ENCODE measurements at regions of chr6 and their contacts with region 1.

Region 1: DNA sequence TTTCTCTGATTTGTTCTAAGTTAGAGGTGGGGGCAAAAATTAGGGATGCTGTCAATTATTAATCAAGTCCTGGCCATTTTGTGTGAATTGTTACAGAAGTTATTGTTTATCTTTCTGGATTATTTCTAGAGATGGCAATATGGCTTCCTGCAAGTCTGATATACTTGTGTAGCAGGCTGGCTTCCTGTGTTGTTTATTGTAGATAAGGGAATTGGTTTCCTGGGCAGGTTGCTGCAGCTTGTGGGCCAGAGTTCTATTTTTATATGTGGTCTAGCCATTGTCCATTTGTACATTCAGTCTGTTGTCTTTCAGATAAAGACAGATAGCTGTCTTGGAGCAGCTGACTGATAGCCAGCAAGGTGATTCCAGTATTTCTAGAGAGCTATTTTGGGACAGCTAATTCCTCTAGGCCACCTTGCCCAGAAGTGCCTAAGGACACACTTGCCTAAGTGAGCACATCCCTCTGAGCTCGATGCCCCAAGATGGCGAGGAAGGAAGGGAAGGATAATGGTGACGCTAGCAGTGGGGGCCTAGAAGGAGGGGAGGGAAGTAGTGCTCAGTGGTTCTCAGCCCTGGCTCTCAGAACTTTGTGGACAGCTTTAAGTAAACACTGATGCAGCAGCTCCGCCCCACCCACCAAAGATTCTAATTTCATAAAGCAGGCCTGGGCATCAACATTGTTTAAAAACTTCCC is 25.5 kb downstream of the DDO start:
- DNase-seq: no peak
- ATAC-seq: no peak
- H3K4me3 ChIP-seq: no peak overlapping the region
- H3K27ac ChIP-seq: no peak overlapping the region
- H3K4me1 ChIP-seq: no peaks in the 10 kb centered on the region
- H3K27me3 ChIP-seq: no peaks in the 10 kb centered on the region
- CTCF ChIP-seq: no peak
- POLR2A ChIP-seq: no peak
- RAD21 ChIP-seq: no peak

Region 2: GRCh38 chr6:109526905-109527628 is 862.8 kb before region 1 on chr6:
- CTCF ChIA-PET with region 1: interaction called, 5 read pairs
- POLR2A ChIA-PET with region 1: no interaction called
- RAD21 ChIA-PET with region 1: no interaction called
- intact Hi-C with region 1: loop called (anchors 2 kb)
- DNase-seq: peak; percentile 69
- ATAC-seq: peak; percentile 96
- H3K4me3 ChIP-seq: no peak overlapping the region
- H3K27ac ChIP-seq: no peak overlapping the region
- H3K4me1 ChIP-seq: no peaks in the 10 kb centered on the region
- H3K27me3 ChIP-seq: no peaks in the 10 kb centered on the region
- CTCF ChIP-seq: peak; percentile 58 to 80 (median 78)
- POLR2A ChIP-seq: no peak
- RAD21 ChIP-seq: peak; percentile 86

Region 3: GRCh38 chr6:109705258-109705657 is 684.6 kb before region 1 on chr6:
- CTCF ChIA-PET with region 1: interaction called, 10 read pairs
- POLR2A ChIA-PET with region 1: no interaction called
- RAD21 ChIA-PET with region 1: no interaction called
- intact Hi-C with region 1: loop called (anchors 1 kb)
- DNase-seq: peak; percentile 78
- ATAC-seq: peak; percentile 99
- H3K4me3 ChIP-seq: no peak overlapping the region
- H3K27ac ChIP-seq: no peak overlapping the region
- H3K4me1 ChIP-seq: peaks cover 0 to 3% of the 10 kb centered on the region in 2 experiments; a peak in 1 of 4 replicates
- H3K27me3 ChIP-seq: no peaks in the 10 kb centered on the region
- CTCF ChIP-seq: peak; percentile 92 to 100 (median 100)
- POLR2A ChIP-seq: no peak
- RAD21 ChIP-seq: peak; percentile 100

Region 4: GRCh38 chr6:110039364-110039980 is 350.4 kb before region 1 on chr6:
- CTCF ChIA-PET with region 1: interaction called, 30 read pairs
- POLR2A ChIA-PET with region 1: no interaction called
- RAD21 ChIA-PET with region 1: interaction called, 5 to 7 read pairs
- intact Hi-C with region 1: loop called (anchors 1 kb)
- DNase-seq: peak; percentile 80
- ATAC-seq: peak; percentile 91
- H3K4me3 ChIP-seq: peak overlapping the region in 1 of 2 experiments; percentile 29; a peak in 1 of 4 replicates
- H3K27ac ChIP-seq: no peak overlapping the region
- H3K4me1 ChIP-seq: peaks cover 2 to 19% of the 10 kb centered on the region in 2 experiments; a peak in 3 of 4 replicates
- H3K27me3 ChIP-seq: no peaks in the 10 kb centered on the region
- CTCF ChIP-seq: peak; percentile 89 to 98 (median 98)
- POLR2A ChIP-seq: no peak
- RAD21 ChIP-seq: peak; percentile 99

Region 5: DNA sequence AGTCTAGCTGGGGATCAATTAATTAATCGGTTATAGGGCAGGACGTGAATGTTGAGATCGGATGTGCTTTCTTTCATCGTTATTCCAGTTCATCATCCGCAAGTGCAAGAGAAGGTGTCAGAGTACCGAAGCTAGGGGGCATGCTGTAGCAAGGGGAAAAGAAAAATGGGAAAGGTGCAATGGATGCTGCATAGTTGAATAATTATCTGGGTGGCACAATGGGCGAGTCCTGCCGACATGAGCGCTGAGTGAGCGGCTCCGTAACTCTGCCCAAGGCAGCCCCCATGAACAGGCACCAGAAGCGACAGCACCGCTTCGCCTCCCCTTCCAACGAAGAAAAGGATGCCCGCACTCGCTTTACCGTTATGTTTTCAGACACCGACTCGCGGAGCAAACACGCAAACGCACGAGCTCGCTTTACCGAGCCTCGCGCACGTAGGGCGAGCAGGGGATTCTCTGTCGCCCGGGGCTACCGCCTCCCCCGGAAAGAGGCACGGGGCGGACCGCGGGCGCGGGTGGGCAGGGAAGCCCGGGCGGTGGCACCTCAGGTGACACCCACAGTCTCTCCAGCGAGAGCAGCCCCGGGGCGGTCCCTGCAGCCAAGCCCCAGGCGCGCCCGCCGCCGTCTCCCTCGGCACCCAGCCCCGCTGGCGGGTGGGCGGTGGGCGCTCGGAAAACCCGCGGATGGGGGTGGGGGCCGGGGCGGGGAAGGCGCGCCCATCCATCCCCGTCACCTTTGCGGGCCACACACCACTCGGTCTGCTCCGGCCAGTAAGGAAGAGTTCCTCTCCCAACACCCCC is 211.0 kb before region 1 on chr6:
- CTCF ChIA-PET with region 1: interaction called, 3 read pairs
- POLR2A ChIA-PET with region 1: no interaction called
- RAD21 ChIA-PET with region 1: no interaction called
- intact Hi-C with region 1: loop called (anchors 1 kb)
- DNase-seq: peak; percentile 42
- ATAC-seq: peak; percentile 31
- H3K4me3 ChIP-seq: peak overlapping the region; percentile 75 to 89
- H3K27ac ChIP-seq: peak overlapping the region; percentile 68
- H3K4me1 ChIP-seq: peaks cover 12 to 17% of the 10 kb centered on the region in 2 experiments; a peak in 3 of 4 replicates
- H3K27me3 ChIP-seq: no peaks in the 10 kb centered on the region
- CTCF ChIP-seq: peak; percentile 43 to 79 (median 62); a peak in 5 of 6 replicates
- POLR2A ChIP-seq: no peak
- RAD21 ChIP-seq: peak; percentile 77

Region 6: DNA sequence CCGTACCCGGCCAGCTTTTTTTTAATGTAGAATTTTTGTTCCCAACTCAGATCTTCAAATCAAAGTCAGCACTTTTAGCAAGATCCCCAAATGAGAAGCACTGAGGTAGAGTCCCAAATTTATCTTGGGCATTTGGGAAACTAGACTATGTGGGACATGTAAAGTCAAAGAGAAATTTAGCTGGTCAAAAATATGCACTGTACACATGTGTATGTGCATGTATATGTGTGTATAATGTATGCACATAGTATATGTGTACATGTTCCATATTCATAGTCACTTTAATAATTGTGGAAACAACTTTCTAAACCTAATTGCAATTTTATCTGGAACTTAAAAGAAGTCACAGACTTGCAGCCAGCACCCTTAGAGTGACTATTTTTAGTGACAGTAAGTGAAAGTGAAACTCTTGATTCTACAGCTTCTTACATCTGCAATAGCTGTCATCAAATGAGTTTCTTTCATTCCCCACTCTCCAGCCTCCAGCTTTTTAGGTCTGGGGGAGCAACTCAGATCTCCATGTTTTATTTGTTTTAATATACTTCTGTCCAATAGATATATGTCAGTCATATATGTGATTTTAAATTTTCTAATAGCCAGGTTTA is 156.0 kb before region 1 on chr6:
- CTCF ChIA-PET with region 1: no interaction called
- POLR2A ChIA-PET with region 1: no interaction called
- RAD21 ChIA-PET with region 1: no interaction called
- intact Hi-C with region 1: no loop called
- DNase-seq: no peak
- ATAC-seq: no peak
- H3K4me3 ChIP-seq: no peak overlapping the region
- H3K27ac ChIP-seq: no peak overlapping the region
- H3K4me1 ChIP-seq: no peaks in the 10 kb centered on the region
- H3K27me3 ChIP-seq: no peaks in the 10 kb centered on the region
- CTCF ChIP-seq: no peak
- POLR2A ChIP-seq: no peak
- RAD21 ChIP-seq: no peak